HCT116 (cell line): ENCODE measurements at regions of chr5 and their contacts with region 1.

Region 1: DNA sequence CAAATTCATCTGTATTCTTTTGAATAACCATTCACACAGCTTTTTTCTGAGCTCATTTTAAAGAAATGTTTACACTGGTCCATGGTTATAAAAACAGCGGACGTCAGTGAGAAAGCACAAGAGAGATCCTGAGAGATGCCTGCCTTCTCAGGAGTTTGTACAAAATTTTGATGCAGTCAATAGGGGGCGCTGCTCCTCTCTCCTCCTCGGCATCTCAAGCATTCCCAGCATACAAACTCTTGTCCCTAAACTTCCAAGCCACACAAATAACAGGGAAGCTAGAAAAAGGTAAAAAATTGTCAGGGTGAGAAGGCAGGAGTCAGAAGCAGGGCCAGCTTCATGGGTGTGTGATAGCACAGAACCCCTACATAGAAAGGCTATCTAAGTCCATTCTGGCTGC is 11.2 kb upstream of the CCDC152 start:
- DNase-seq: peak; percentile 13
- ATAC-seq: peak; percentile 60
- H3K4me3 ChIP-seq: no peak overlapping the region
- H3K27ac ChIP-seq: no peak overlapping the region
- H3K4me1 ChIP-seq: no peaks in the 10 kb centered on the region
- H3K27me3 ChIP-seq: no peaks in the 10 kb centered on the region
- CTCF ChIP-seq: peak in 2 of 3 experiments; percentile 65 to 79; a peak in 4 of 6 replicates
- POLR2A ChIP-seq: no peak
- RAD21 ChIP-seq: no peak

Region 2: GRCh38 chr5:42889311-42889933 is 144.0 kb after region 1 on chr5:
- CTCF ChIA-PET with region 1: interaction called, 5 read pairs
- POLR2A ChIA-PET with region 1: no interaction called
- RAD21 ChIA-PET with region 1: no interaction called
- intact Hi-C with region 1: loop called (anchors 5 kb)
- DNase-seq: peak; percentile 66
- ATAC-seq: peak; percentile 94
- H3K4me3 ChIP-seq: no peak overlapping the region
- H3K27ac ChIP-seq: no peak overlapping the region
- H3K4me1 ChIP-seq: peaks cover 0 to 4% of the 10 kb centered on the region in 2 experiments; a peak in 2 of 4 replicates
- H3K27me3 ChIP-seq: peaks cover 5% of the 10 kb centered on the region
- CTCF ChIP-seq: peak; percentile 52 to 93 (median 86); a peak in 5 of 6 replicates
- POLR2A ChIP-seq: no peak
- RAD21 ChIP-seq: peak; percentile 85